Activated CD4-positive, alpha-beta memory T cell treated with anti-CD3 and anti-CD28 coated beads for 36 hours (primary cell): ENCODE measurements at regions of chr1 and their contacts with region 1.

Region 1: DNA sequence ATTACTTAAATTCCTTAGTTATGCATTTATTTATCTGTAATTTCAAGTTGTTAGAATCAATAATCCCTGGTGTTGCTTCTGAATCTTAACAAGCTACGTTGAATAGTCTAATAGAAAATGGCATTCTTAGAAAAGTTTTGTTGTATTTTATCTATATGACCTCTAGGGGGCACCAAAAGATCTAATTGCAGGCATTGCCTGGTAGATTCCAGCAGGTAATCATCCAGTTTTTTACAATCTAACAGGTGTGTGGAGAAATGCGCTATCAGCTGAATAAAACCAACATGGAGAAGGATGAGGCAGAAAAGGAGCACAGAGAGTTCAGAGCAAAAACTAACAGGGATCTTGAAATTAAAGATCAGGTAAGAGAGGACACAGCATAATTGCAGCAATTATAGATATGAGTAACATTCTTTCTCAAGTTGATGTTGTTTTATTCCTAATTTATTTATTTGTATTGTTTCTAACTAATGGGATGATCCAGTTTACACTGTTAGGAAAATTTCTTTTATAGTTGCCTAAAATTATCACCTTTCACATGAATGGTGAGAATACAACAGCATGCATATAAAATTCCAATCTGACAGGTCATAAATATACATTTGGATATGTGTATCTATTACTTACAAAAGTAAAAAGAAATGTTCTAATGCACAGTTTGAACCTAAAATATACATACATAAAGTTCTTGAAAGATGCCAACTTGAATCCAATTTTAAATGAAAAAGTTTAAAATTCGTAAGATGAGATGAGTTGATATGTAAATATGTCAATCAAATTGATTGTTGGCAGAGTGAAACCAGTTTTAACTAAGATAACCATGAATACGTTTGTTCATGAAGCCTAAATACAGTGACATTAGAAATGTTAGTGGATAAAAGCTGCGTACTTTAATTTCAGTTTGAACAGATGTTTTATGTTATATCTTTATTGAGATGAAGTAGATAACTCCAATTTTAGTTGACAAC is 88.4 kb downstream of the SDCCAG8 start:
- DNase-seq: no peak
- H3K4me3 Mint-ChIP-seq: no peak overlapping the region
- H3K27ac Mint-ChIP-seq: no peak overlapping the region
- H3K4me1 Mint-ChIP-seq: peaks cover 2% of the 10 kb centered on the region
- H3K27me3 Mint-ChIP-seq: no peaks in the 10 kb centered on the region

Region 2: DNA sequence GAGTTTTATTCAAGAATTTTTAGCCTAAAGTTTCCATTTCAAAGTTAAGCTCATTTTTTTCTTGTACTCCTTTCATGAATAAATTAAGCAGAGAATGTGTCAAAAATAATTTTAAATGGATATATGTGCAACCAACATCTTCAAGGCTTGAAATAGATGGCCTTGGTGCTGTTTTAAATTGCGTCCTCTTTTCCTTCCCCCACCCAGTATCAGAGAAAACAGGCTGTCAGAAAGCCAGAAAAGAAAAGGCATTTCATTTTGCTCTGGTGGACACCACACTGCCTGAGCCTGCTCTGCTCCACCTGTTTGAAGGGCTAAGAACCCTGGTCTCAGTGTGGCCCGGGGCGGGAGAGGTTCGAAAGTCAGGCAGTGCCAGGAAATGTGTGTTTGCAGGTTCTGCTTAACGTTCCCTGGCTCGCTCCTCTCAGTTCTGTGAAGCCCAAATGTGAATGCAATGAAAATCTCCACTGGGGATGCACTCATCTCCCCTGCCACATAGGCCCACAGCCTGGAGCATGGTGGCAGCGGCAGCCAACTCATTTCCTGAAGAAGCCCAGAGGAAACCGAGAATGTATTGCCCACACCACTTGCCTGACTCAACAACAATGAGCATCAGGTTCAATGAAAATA is 46.0 kb after region 1 on chr1:
- CTCF ChIA-PET with region 1: no interaction called
- POLR2A ChIA-PET with region 1: no interaction called
- intact Hi-C with region 1: no loop called
- DNase-seq: peak; percentile 45
- H3K4me3 Mint-ChIP-seq: no peak overlapping the region
- H3K27ac Mint-ChIP-seq: no peak overlapping the region
- H3K4me1 Mint-ChIP-seq: peaks cover 5% of the 10 kb centered on the region
- H3K27me3 Mint-ChIP-seq: no peaks in the 10 kb centered on the region

Region 3: DNA sequence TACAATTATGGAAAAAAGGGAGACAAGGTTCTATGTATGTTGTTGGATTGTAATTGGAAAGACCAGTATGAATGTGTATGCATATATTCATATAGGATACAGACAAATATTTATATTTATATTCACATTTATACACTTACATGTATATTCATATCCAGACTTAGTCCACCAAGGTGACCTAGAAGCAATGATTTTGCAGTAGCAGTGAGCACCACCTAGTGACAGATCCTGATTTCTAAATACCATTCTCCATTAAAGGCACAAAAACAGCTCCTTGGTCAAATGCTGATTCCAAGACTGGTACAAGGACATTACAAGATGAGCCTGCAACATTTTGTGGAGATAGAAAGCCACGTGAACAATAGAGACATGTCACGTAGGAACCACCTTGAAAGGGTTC is 65.0 kb after region 1 on chr1:
- CTCF ChIA-PET with region 1: interaction called, 25 read pairs
- POLR2A ChIA-PET with region 1: no interaction called
- intact Hi-C with region 1: loop called (anchors 5 kb)
- DNase-seq: no peak
- H3K4me3 Mint-ChIP-seq: no peak overlapping the region
- H3K27ac Mint-ChIP-seq: no peak overlapping the region
- H3K4me1 Mint-ChIP-seq: peaks cover 20% of the 10 kb centered on the region
- H3K27me3 Mint-ChIP-seq: no peaks in the 10 kb centered on the region

Region 4: GRCh38 chr1:243447347-243447746 is 103.1 kb after region 1 on chr1:
- CTCF ChIA-PET with region 1: no interaction called
- POLR2A ChIA-PET with region 1: no interaction called
- intact Hi-C with region 1: no loop called
- DNase-seq: no peak
- H3K4me3 Mint-ChIP-seq: no peak overlapping the region
- H3K27ac Mint-ChIP-seq: no peak overlapping the region
- H3K4me1 Mint-ChIP-seq: no peaks in the 10 kb centered on the region
- H3K27me3 Mint-ChIP-seq: no peaks in the 10 kb centered on the region

Region 5: DNA sequence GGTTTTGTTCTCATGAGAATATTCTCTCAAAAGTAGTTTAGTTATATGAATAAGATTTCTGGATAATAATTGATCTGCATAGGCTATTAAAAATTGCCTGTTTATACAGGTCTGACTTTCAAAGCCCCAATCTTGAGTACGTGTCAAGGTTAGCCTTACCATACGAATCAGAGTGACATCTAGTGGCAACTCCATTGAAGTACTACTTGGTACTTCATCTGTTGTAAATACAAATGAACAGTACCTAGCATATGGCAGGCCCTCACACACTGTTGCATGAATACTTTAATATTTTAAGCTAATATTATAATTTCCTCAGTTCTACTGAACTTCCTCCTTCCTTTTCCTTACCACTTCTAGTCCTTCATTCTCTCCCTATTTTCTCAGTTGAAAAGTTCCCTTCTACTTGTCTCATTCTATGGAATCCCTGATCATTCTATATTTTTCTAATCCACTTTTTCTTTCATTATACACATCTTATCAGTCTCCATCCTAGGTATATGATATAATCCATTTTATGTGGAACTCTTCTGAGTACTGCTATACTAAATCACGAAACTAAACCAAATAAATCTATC is 404.5 kb after region 1 on chr1:
- CTCF ChIA-PET with region 1: interaction called, 33 read pairs
- POLR2A ChIA-PET with region 1: interaction called, 3 read pairs
- intact Hi-C with region 1: loop called (anchors 1 kb)
- DNase-seq: no peak
- H3K4me3 Mint-ChIP-seq: no peak overlapping the region
- H3K27ac Mint-ChIP-seq: no peak overlapping the region
- H3K4me1 Mint-ChIP-seq: peaks cover 34% of the 10 kb centered on the region
- H3K27me3 Mint-ChIP-seq: no peaks in the 10 kb centered on the region

Region 6: GRCh38 chr1:243798726-243799125 is 454.5 kb after region 1 on chr1:
- CTCF ChIA-PET with region 1: no interaction called
- POLR2A ChIA-PET with region 1: no interaction called
- intact Hi-C with region 1: no loop called
- DNase-seq: peak; percentile 17
- H3K4me3 Mint-ChIP-seq: no peak overlapping the region
- H3K27ac Mint-ChIP-seq: no peak overlapping the region
- H3K4me1 Mint-ChIP-seq: peaks cover 35% of the 10 kb centered on the region
- H3K27me3 Mint-ChIP-seq: no peaks in the 10 kb centered on the region

Region 7: DNA sequence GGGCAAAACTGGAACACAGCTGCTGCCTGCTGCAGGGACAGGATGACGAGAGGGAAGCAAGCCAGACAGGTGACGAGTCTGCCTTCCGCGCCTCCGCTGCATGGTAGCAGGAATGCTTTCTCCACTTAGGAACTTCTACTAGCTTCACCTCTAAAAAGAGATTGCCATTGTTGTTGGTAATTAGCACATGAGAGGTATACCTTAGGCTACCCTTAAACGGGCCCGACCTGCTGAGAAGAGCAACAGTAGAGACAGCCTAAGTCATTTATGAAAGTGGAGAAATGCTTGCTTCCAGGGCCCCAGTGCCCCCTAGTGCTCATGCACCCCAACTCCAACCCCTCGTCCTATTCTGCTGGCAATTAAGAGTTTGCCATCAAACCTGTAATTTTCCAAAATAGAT is 602.7 kb after region 1 on chr1:
- CTCF ChIA-PET with region 1: interaction called, 7 read pairs
- POLR2A ChIA-PET with region 1: no interaction called
- intact Hi-C with region 1: loop called (anchors 1 kb)
- DNase-seq: peak; percentile 56
- H3K4me3 Mint-ChIP-seq: no peak overlapping the region
- H3K27ac Mint-ChIP-seq: no peak overlapping the region
- H3K4me1 Mint-ChIP-seq: peaks cover 1% of the 10 kb centered on the region
- H3K27me3 Mint-ChIP-seq: peaks cover 5% of the 10 kb centered on the region